ENCODE measurements at regions of chr18 and their contacts with region 1.

Region 1: DNA sequence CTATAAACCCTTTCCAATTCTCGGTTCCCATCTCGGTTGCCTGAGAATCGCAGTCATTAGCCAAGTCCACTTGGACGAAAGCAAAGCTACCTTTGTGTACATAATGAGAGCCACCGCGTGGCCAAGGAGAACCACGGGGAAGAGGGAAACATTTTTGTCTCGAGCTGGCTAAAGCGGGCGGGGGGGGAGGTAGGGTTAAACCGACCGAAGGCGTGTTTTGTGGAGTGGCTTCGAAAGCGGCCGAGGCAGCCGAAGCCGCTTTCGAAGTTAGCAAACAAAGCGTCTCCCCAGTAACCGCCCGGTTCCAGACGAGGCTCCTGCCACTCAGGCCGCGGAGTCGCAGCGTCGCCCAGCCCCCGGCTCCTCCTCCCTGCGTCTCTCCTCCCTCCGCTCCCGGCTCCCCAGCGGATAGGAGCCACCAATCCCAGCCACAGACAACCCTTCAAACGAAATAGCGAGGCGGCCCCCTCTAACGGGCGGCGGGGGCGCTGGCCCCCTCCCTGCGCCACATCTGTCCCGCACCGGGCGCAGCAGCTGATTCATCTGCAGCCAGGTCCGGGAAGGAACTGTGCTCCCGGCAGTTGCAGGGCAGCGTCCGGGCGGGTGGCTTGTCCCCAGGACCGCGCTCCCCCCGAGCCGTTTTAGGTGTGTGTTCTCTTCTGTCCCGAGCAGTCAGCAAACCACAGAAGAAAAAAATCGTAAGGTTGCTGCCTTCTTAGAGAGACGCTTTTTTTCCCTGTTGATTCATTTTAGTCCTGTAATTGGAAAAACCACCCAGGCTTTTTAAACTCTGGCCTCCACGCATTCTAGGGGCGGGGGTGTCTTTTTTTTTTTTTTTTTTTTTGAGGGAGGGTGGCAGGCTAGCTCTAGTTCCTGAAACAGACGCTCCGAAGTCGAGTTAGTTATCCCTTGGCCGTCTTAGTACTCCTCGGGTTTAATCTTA is 1.8 kb upstream of the TGIF1 start:
- DNase-seq: peak; percentile 49
- H3K4me3 ChIP-seq: peak overlapping the region; percentile 80 to 95 (median 83)
- H3K27ac ChIP-seq: peak overlapping the region; percentile 97 to 99 (median 99)
- H3K4me1 ChIP-seq: peaks cover 8 to 33% (median 12%) of the 10 kb centered on the region in 3 donors
- H3K27me3 ChIP-seq: no peaks in the 10 kb centered on the region
- CTCF ChIP-seq: peak in 1 of 6 experiments; percentile 12
- POLR2A ChIP-seq: peak in 3 of 4 donors; percentile 79 to 95 (median 92)

Region 2: GRCh38 chr18:3238742-3239141 is 209.4 kb before region 1 on chr18:
- intact Hi-C with region 1: no loop called
- DNase-seq: no peak
- H3K4me3 ChIP-seq: no peak overlapping the region
- H3K27ac ChIP-seq: no peak overlapping the region
- H3K4me1 ChIP-seq: peaks cover 0 to 5% (median 0%) of the 10 kb centered on the region in 3 donors
- H3K27me3 ChIP-seq: no peaks in the 10 kb centered on the region
- CTCF ChIP-seq: no peak
- POLR2A ChIP-seq: no peak

Region 3: DNA sequence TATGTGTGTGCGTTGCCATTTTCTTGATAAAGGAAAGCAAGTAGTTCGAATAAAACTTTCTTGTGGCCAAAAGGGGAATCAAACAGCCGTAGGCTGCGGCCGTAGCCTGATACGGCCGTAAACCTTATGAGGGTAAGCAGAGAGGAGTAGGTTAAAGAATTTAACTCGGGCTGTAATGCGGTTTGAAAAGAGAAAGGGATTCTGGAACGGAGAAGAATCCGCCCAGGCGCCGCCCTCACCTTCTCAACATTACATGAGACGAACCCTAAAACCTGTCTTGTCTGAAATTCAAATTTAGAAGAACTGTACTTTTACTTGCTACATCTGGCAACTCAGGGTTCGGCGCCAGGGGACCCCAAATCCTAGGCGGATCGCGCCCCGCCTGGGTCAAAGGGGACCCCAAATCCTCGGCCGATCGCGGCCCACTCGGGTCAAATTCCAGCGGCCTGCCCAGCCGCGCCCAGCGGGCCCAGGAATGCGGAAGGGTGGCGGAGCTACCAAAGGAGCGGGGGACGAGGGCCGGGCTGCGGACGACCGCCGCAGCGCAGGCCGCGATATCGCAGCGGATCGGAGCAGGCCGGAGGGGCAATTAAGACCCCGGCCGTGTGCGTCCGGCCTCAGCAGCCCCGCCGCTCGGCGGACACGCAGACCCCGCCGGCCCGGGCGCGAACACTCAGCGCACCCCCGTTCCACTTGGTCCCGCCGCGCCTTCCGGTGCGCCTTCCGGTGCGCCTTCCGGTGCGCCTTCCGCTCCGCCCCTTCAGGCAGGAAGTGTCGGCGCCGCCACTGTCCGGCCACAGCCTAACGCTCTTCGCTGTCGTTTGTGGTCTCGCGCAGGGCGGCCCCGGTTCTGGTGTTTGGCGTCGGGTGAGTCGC is 186.6 kb before region 1 on chr18 and contains the start of gene MYL12B:
- intact Hi-C with region 1: loop called (anchors 10 kb)
- DNase-seq: peak; percentile 11
- H3K4me3 ChIP-seq: peak within 1 kb of the TSS; percentile 74 to 92 (median 82)
- H3K27ac ChIP-seq: peak within 1 kb of the TSS; percentile 95 to 98 (median 98)
- H3K4me1 ChIP-seq: peaks cover 12 to 61% (median 34%) of the 10 kb centered on the region in 3 donors
- H3K27me3 ChIP-seq: no peaks in the 10 kb centered on the region
- CTCF ChIP-seq: peak in 1 of 6 experiments; percentile 13
- POLR2A ChIP-seq: peak in 3 of 4 donors; percentile 72 to 88 (median 80)
- total RNA-seq, gene MYL12B: 362 to 430 (median 386) TPM

Region 4: DNA sequence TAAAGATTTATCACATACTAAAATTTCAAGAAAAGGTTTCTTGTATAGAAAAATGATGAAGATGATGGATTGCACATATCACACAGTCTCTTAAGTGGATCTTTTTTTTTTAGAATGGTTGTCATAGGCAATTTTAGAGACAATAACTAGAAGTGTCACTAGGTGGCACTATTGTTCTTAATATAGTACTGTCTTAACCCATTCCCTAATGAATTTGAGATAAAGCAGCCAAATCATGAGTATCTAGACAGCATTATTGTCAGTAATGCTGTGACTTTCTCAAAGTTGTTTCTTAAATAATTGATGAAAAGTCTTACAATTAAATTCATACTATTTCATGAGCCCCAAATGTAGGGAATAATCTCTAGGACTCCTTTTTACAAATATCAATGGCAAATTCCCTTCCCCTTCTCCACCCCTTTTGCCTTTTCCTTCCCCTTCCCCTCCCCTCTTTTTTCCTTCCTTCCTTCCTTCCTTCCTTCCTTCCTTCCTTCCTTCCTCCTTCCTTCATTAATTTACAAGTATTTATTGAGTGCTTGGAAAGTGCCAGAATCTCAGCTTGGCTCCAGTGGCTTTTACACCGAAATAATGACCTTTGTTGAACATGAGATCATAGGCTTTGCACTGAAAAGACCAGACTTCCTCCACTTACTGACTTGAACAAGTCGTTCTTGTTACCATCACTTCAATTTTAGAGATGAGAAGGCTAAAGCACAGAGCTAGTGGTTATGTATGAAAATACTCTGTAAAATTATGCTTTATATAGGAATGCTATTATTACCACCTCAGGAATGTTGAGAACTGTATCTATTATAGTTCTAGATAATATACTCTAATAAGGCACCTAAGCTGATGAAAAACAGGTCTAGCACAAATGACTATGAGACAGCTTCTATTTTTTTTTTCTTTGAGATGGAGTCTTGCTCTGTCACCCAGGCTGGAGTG is 166.4 kb before region 1 on chr18:
- intact Hi-C with region 1: loop called (anchors 10 kb)
- DNase-seq: no peak
- H3K4me3 ChIP-seq: no peak overlapping the region
- H3K27ac ChIP-seq: peak overlapping the region in 2 of 4 donors; percentile 11 to 17
- H3K4me1 ChIP-seq: peaks cover 0 to 26% (median 5%) of the 10 kb centered on the region in 3 donors
- H3K27me3 ChIP-seq: no peaks in the 10 kb centered on the region
- CTCF ChIP-seq: peak; percentile 54 to 81 (median 62)
- POLR2A ChIP-seq: no peak

Region 5: GRCh38 chr18:3593904-3594661 is 145.9 kb after region 1 on chr18:
- intact Hi-C with region 1: loop called (anchors 5 kb)
- DNase-seq: peak; percentile 46
- H3K4me3 ChIP-seq: peak overlapping the region; percentile 20 to 65 (median 48)
- H3K27ac ChIP-seq: peak overlapping the region; percentile 91 to 99 (median 97)
- H3K4me1 ChIP-seq: peaks cover 34 to 81% (median 49%) of the 10 kb centered on the region in 3 donors
- H3K27me3 ChIP-seq: no peaks in the 10 kb centered on the region
- CTCF ChIP-seq: peak; percentile 89 to 95 (median 92)
- POLR2A ChIP-seq: peak in 1 of 4 donors; percentile 72

Region 6: GRCh38 chr18:3604498-3605408 is 156.6 kb after region 1 on chr18:
- intact Hi-C with region 1: loop called (anchors 5 kb)
- DNase-seq: no peak
- H3K4me3 ChIP-seq: peak overlapping the region; percentile 7 to 62 (median 46)
- H3K27ac ChIP-seq: peak overlapping the region; percentile 91 to 97 (median 95)
- H3K4me1 ChIP-seq: peaks cover 13 to 47% (median 26%) of the 10 kb centered on the region in 3 donors
- H3K27me3 ChIP-seq: no peaks in the 10 kb centered on the region
- CTCF ChIP-seq: no peak
- POLR2A ChIP-seq: no peak

Region 7: GRCh38 chr18:3665780-3666525 is 217.8 kb after region 1 on chr18:
- intact Hi-C with region 1: loop called (anchors 10 kb)
- DNase-seq: peak; percentile 3
- H3K4me3 ChIP-seq: peak overlapping the region; percentile 2 to 46 (median 28)
- H3K27ac ChIP-seq: peak overlapping the region; percentile 63 to 83 (median 64)
- H3K4me1 ChIP-seq: peaks cover 4 to 18% (median 10%) of the 10 kb centered on the region in 3 donors
- H3K27me3 ChIP-seq: no peaks in the 10 kb centered on the region
- CTCF ChIP-seq: peak; percentile 74 to 98 (median 97)
- POLR2A ChIP-seq: no peak